ENCODE measurements at regions of chr9 and their contacts with region 1.

Region 1: GRCh38 chr9:93134015-93134739 is at the start of gene NINJ1:
- DNase-seq: peak; percentile 59 to 92 (median 86)
- ATAC-seq: peak; percentile 85 to 86
- H3K4me3 Mint-ChIP-seq: peak within 1 kb of the TSS; percentile 85 to 93 (median 88)
- H3K27ac Mint-ChIP-seq: peak within 1 kb of the TSS; percentile 82 to 99 (median 96)
- H3K4me1 Mint-ChIP-seq: peaks cover 37 to 71% (median 63%) of the 10 kb centered on the region in 4 donors
- H3K27me3 Mint-ChIP-seq: no peaks in the 10 kb centered on the region
- polyA plus RNA-seq, gene NINJ1: 78.5 to 97.6 (median 96.0) TPM

Region 2: GRCh38 chr9:93108291-93109041 is 25.7 kb before region 1 on chr9:
- POLR2A ChIA-PET with region 1: interaction called, 19 read pairs
- DNase-seq: no peak
- ATAC-seq: no peak
- H3K4me3 Mint-ChIP-seq: no peak overlapping the region
- H3K27ac Mint-ChIP-seq: peak overlapping the region in 5 of 10 donors; percentile 17 to 86 (median 81)
- H3K4me1 Mint-ChIP-seq: peaks cover 18 to 65% (median 51%) of the 10 kb centered on the region in 4 donors
- H3K27me3 Mint-ChIP-seq: no peaks in the 10 kb centered on the region

Measured in naive thymus-derived CD8-positive, alpha-beta T cell (primary cell).